Left ventricle myocardium superior (tissue), 1 donor: ENCODE measurements at regions of chr4 and their contacts with region 1.

Region 1: DNA sequence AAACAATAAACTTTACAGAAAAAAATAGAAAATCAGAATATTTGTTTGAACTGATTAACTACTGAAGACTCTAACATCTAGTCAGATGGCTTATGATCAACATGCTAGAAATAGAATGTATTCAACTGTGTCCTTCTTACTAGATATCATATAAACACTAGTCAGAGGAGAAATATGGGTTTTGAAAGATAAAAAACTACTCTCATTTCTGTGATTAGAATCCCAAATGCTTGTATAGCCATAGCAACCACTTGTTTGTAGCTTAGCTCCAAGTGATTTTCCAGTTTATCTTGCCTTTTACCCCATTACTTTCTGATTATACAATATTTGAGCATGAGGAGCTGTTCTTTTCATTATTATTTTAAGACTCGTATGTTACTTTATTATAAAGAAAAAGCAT is 31.2 kb downstream of the USP38 start:
- DNase-seq: no peak
- ATAC-seq: peak; percentile 43

Region 2: DNA sequence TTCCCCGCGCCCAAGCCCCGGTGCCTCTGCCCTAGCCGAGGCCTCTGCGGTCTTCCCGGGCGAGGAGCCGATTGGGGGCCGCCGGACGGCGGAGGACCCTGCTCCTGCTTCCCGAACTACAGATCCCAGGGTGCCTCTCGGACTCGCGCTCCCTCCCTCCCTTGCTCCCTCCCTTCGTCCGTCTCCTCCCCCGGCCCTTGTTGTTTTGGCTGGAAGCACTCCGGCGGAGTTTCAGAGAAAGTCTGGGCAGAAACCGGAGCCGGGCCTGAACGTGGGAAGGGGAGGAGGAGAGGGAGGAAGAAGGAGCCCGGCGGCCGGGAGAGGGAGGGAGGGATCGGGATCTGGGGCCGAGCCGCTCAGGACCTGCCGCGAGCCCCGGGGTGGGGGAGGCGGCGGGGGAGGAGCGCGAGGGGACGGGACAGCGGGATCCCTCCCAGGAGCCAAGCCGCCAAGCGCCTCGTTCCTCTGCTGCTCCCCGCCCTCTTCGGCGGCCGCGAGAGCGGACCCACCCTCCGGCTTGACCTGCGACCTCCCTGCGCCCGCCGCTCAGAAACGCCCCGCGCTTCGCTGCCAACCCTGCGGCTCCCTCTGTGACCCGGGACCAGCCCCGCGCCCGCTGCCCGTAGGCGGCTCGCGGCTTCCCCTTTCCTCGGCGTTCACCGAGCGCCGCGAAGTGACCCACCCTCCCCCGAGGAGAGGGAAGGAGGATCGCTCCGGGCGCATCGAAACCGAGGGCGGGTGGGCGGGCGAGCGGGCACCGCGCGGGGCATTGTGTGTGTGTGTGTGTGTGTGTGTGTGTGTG is 120.3 kb after region 1 on chr4:
- intact Hi-C with region 1: loop called (anchors 10 kb)
- DNase-seq: peak; percentile 94
- ATAC-seq: peak; percentile 90

Region 3: GRCh38 chr4:143597276-143597675 is 381.4 kb after region 1 on chr4:
- intact Hi-C with region 1: no loop called
- DNase-seq: no peak
- ATAC-seq: no peak